Activated CD8-positive, alpha-beta T cell treated with anti-CD3 and anti-CD28 coated beads for 36 hours (primary cell): ENCODE measurements at regions of chr17 and their contacts with region 1.

Region 1: DNA sequence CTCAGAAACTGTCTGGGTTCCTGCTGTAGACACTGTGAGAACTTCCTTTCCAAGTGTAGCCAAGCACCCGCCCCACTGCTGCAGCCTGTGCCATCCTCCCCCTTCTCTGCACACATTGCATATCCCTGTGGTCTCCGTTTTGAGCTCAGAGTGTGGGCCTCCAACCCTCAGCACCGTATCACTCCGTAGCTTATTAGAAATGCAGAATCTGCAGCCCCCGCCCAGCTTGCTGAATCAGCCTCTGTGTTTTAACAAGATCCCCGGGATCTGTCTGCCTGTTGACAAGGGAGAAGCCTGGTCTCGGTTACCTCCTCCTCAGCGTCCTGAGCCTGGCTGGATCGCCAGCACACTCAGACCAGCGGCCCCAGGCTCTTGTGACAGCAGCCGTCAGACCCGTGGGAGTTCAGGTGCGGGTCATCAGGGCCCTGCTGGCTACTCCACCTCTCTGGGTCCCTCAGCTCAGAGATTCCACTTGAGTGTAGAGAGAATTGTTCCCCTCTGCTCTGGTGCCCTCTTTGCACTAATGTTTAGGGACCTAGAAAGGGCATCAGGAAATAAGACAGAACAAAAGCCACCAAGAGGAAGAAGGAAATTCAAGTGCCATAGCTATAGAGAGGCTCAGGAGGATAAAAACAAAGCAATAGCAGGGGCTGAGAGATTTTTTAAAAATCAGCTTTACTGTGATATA is 92.3 kb downstream of the PITPNC1 start:
- DNase-seq: peak; percentile 80
- ATAC-seq: peak; percentile 79
- H3K4me3 Mint-ChIP-seq: peak overlapping the region; percentile 66
- H3K27ac Mint-ChIP-seq: peak overlapping the region; percentile 94
- H3K4me1 Mint-ChIP-seq: peaks cover 71% of the 10 kb centered on the region
- H3K27me3 Mint-ChIP-seq: no peaks in the 10 kb centered on the region
- CTCF ChIP-seq: no peak

Region 2: DNA sequence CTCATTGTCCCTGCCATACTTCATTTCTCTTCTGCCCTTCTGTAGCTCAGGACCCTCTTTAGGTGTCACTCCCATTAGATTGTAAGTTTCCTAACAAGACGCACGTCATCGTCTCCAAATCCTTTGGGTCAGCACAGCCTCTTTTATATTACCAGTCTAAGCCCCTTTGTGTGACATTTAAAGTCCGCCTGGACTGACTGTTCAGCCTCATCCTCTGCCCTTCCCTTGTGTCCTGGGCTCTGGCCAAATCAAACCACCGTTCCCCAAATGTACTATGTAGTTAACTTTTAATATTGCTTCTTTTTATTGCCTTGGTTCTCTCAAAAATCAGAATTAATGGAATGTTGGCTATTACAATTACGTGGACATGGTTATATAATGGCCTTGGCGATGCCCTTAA is 54.1 kb before region 1 on chr17:
- CTCF ChIA-PET with region 1: interaction called, 10 read pairs
- POLR2A ChIA-PET with region 1: no interaction called
- intact Hi-C with region 1: loop called (anchors 2 kb)
- DNase-seq: no peak
- ATAC-seq: no peak
- H3K4me3 Mint-ChIP-seq: no peak overlapping the region
- H3K27ac Mint-ChIP-seq: peak overlapping the region; percentile 57
- H3K4me1 Mint-ChIP-seq: peaks cover 74% of the 10 kb centered on the region
- H3K27me3 Mint-ChIP-seq: no peaks in the 10 kb centered on the region
- CTCF ChIP-seq: no peak

Region 3: DNA sequence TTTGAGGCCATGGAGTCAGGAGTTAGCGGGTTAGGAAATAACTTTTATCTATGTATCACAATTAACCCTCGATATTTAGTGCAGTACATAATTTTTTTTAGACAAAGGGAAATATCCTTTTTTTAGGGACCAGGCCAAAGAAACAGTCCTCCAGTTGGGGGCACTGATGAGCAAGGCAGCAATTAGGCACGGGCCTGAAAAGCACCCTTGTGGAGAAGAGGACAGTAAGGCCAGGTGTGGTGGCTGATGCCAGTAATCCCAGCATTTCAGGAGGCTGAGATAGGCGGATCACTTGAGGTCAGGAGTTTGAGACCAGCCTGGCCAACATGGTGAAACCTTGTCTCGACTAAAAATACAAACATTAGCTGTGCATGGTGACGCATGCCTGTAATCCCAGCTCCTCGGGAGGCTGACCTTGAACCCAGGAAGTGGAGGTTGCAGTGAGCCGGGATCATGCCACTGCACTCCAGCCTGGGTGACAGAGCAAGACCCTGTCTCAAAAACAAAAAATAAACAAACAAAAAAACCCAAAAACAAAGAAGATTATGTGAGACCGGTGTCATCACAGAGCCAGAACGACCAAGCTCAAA is 90.1 kb after region 1 on chr17:
- CTCF ChIA-PET with region 1: no interaction called
- POLR2A ChIA-PET with region 1: no interaction called
- intact Hi-C with region 1: no loop called
- DNase-seq: peak; percentile 15
- ATAC-seq: no peak
- H3K4me3 Mint-ChIP-seq: no peak overlapping the region
- H3K27ac Mint-ChIP-seq: peak overlapping the region; percentile 1
- H3K4me1 Mint-ChIP-seq: peaks cover 7% of the 10 kb centered on the region
- H3K27me3 Mint-ChIP-seq: no peaks in the 10 kb centered on the region
- CTCF ChIP-seq: peak; percentile 20